ENCODE measurements at regions of chr2 and their contacts with region 1.

Region 1: GRCh38 chr2:10097352-10098148 is 17.3 kb upstream of the CYS1 start:
- DNase-seq: peak; percentile 89

Region 2: GRCh38 chr2:10072656-10073480 is 24.7 kb before region 1 on chr2:
- CTCF ChIA-PET with region 1: interaction called, 46 read pairs
- POLR2A ChIA-PET with region 1: interaction called, 3 read pairs
- DNase-seq: peak; percentile 90

Region 3: DNA sequence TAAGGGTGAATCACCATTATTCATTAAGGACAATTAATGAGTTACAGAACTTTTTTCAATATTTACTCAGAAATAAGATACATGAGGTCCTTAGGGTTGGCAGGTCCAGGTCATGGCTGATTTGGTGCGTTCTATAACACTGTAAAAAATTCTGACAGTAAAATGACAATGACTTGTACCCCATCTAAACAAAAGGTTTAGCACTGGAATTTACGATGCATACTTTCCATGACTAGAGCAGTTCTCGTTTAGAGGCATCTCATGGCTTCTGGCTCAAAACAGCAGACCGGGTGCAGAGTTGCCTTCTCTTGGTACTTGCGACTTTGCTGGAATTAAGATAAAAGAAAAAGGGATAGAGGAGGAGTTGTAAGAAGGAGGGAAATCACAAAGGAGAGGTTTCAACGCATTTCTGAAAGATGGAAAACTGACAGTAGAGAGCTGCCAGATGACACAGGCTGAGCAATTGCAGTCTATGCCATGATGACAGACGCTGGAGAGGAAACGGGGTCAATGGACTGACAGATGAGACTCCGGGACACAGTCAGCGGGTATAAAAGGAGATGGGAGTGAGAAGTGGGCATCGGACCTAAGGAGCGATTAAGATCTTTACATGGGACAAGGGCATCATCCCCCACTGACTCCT is 13.2 kb before region 1 on chr2:
- CTCF ChIA-PET with region 1: interaction called, 15 read pairs
- POLR2A ChIA-PET with region 1: interaction called, 3 read pairs
- DNase-seq: no peak